IMR-90 (cell line): ENCODE measurements at regions of chr13 and their contacts with region 1.

Region 1: GRCh38 chr13:23433171-23434153 is at the start of gene SACS:
- DNase-seq: peak; percentile 52
- ATAC-seq: peak; percentile 88
- H3K4me3 ChIP-seq: peak within 1 kb of the TSS; percentile 88
- H3K27ac ChIP-seq: peak within 1 kb of the TSS; percentile 83
- H3K4me1 ChIP-seq: no peaks in the 10 kb centered on the region
- H3K27me3 ChIP-seq: no peaks in the 10 kb centered on the region
- CTCF ChIP-seq: no peak
- POLR2A ChIP-seq: 0 out of 2 replicates have a peak, but pooled peaks have one; percentile 22
- RAD21 ChIP-seq: no peak
- total RNA-seq, gene SACS: 121 and 174 TPM in 2 replicates

Region 2: DNA sequence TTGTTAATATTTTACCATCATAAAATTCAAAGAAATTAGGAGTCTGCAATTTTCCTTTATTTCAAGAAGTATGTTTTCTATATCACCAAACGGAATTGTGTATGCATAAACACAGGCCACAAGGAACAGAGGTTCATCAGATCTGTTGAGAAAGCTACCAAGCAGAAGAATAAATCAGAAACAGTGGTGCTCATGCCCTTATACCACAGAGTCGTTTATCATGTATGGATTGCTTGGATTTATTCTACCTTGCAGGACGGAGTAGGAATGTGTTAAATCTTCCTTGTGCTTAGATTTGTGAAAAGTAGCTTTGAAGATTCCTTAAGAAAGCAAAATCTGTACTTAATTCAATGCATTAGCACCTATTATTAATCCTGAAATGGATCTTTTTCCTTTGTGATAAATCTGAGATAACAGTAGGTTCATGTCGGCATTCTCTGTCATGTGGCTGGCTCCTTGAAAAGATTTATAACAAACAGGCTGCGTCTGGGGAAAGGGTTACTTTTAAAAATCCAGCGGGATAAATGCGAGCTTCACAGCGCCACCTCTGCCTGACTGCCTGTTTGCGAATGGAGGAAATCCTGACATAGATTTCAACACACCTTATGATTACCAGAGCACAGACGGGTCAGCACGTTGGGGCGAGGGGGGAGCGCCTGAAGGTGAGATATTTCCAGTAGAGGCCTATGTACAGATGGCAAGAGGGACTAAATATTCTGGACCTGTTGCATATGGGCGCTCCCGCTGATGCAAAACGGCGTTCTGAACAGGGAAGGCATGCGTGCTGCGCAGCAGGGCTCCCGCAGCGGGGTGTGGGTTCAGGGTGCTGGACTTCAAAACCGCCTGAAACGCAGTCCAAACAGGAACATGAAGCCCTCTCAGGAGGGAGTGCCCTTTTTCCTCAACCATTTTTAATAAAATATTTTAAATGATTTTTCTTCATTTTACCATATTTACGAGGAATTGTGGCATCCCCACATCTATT is 698.2 kb before region 1 on chr13:
- CTCF ChIA-PET with region 1: no interaction called
- POLR2A ChIA-PET with region 1: no interaction called
- dilution Hi-C with region 1: no loop called
- in situ Hi-C with region 1: no loop called
- intact Hi-C with region 1: no loop called
- DNase-seq: no peak
- ATAC-seq: no peak
- H3K4me3 ChIP-seq: no peak overlapping the region
- H3K27ac ChIP-seq: no peak overlapping the region
- H3K4me1 ChIP-seq: no peaks in the 10 kb centered on the region
- H3K27me3 ChIP-seq: no peaks in the 10 kb centered on the region
- CTCF ChIP-seq: no peak
- POLR2A ChIP-seq: no peak
- RAD21 ChIP-seq: no peak

Region 3: DNA sequence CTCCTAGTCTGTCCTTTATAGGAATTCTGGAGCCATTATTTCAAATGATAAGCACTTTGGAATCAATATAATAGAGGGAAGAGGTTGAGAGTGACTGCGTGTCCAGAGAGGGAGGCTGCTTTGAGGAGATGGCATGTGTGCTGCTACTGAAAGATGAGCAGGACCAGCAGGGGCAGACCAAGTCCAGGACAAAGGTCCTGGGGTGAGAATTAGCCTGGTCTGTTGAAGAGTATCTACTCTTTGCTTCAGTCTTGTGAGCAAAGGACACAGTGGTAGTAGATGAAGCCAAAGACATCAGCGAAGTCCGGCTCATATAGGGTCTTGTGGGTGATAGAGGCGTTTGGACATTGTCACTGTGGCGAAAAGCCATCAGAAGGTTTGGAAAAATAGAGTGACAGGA is 231.6 kb before region 1 on chr13:
- CTCF ChIA-PET with region 1: no interaction called
- POLR2A ChIA-PET with region 1: no interaction called
- dilution Hi-C with region 1: no loop called
- in situ Hi-C with region 1: no loop called
- intact Hi-C with region 1: no loop called
- DNase-seq: no peak
- ATAC-seq: no peak
- H3K4me3 ChIP-seq: no peak overlapping the region
- H3K27ac ChIP-seq: no peak overlapping the region
- H3K4me1 ChIP-seq: no peaks in the 10 kb centered on the region
- H3K27me3 ChIP-seq: no peaks in the 10 kb centered on the region; the same call in 1 of the 2 replicates
- CTCF ChIP-seq: no peak
- POLR2A ChIP-seq: no peak
- RAD21 ChIP-seq: no peak

Region 4: GRCh38 chr13:23460309-23460708 is 26.8 kb after region 1 on chr13:
- CTCF ChIA-PET with region 1: no interaction called
- POLR2A ChIA-PET with region 1: no interaction called
- dilution Hi-C with region 1: no loop called
- in situ Hi-C with region 1: no loop called
- intact Hi-C with region 1: no loop called
- DNase-seq: no peak
- ATAC-seq: no peak
- H3K4me3 ChIP-seq: no peak overlapping the region
- H3K27ac ChIP-seq: no peak overlapping the region
- H3K4me1 ChIP-seq: peaks cover 4% of the 10 kb centered on the region; the same call in 1 of the 2 replicates
- H3K27me3 ChIP-seq: no peaks in the 10 kb centered on the region
- CTCF ChIP-seq: no peak
- POLR2A ChIP-seq: no peak
- RAD21 ChIP-seq: no peak

Region 5: GRCh38 chr13:24243302-24243701 is 809.8 kb after region 1 on chr13:
- CTCF ChIA-PET with region 1: no interaction called
- POLR2A ChIA-PET with region 1: interaction called, 10 read pairs
- dilution Hi-C with region 1: no loop called
- in situ Hi-C with region 1: no loop called
- intact Hi-C with region 1: no loop called
- DNase-seq: no peak
- ATAC-seq: no peak
- H3K4me3 ChIP-seq: no peak overlapping the region
- H3K27ac ChIP-seq: no peak overlapping the region
- H3K4me1 ChIP-seq: no peaks in the 10 kb centered on the region; the same call in 1 of the 2 replicates
- H3K27me3 ChIP-seq: no peaks in the 10 kb centered on the region
- CTCF ChIP-seq: no peak
- POLR2A ChIP-seq: no peak
- RAD21 ChIP-seq: no peak